AG04450 (cell line): ENCODE measurements at regions of chr1 and their contacts with region 1.

Region 1: GRCh38 chr1:117512743-117513321 is 93.0 kb upstream of the TENT5C start:
- DNase-seq: no peak
- H3K4me3 ChIP-seq: no peak overlapping the region
- H3K27ac ChIP-seq: no peak overlapping the region
- H3K27me3 ChIP-seq: no peaks in the 10 kb centered on the region
- CTCF ChIP-seq: peak; percentile 64

Region 2: DNA sequence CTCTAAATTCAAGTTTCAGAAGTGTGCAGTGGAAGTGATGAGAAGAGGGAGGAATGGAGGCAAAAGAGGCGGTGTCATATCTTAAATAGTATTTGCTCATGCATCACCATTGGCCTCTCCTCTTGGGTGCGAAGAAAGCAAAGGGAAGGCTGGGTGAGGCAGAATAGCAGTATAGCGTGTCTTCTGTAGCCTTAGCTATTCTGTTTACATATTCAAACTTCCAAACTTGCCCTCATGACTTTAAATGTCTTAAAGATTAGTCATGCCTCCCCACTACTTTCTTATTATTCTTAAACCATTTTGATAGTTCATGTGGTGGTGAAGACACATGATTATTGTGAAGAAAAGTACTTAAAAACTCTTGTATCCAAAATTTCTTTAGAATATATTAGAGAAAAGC is 11.6 kb before region 1 on chr1:
- CTCF ChIA-PET with region 1: interaction called, 13 read pairs
- POLR2A ChIA-PET with region 1: no interaction called
- DNase-seq: peak; percentile 43
- H3K4me3 ChIP-seq: no peak overlapping the region
- H3K27ac ChIP-seq: peak overlapping the region; percentile 32
- H3K27me3 ChIP-seq: no peaks in the 10 kb centered on the region
- CTCF ChIP-seq: no peak

Region 3: DNA sequence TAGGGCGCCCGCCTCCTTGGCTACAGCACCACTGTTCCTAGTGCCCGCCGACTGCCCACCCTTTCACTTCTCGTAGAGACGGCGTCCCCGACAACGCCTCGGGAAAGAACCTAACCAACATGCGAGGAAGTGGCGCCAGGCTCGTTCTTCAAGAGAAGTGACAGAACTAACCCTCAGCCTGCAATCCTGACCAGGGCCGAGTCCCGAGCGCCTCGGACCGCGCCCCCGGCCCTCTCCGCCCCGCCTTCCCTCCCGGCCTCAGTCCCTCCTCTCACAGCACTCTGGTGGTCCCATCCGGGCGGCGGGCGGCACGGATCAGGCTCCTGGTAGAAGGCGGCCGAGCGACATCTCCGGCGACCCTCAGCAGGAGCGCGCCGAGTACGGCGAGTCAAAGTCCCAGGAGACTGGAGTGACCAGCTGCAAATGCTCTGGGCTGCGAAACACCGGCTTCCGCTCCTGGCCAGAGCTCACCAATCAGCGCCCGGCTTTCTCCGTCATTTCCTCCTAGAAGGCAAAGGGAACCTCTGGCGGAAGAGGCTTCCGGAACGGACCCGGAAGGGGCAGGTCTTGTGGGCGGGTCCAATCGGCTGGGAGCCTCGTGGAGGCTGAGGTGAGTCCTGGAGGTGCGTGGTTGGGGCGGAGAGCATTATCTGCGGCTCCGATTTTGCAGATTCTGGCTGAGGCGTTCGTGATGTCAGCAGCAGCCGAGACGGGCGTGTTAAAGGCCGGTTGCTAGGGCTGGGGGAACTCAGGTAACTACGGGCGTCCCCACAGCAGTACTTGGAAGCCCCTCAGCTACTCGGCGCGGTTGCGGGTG is 416.5 kb after region 1 on chr1 and contains the starts of genes GDAP2 and WDR3:
- CTCF ChIA-PET with region 1: interaction called, 16 read pairs
- POLR2A ChIA-PET with region 1: interaction called, 4 read pairs
- DNase-seq: peak; percentile 87
- H3K4me3 ChIP-seq: peak within 1 kb of the TSS; percentile 97
- H3K27ac ChIP-seq: peak within 1 kb of the TSS; percentile 73
- H3K27me3 ChIP-seq: no peaks in the 10 kb centered on the region
- CTCF ChIP-seq: no peak
- polyA plus RNA-seq, gene GDAP2: 18.9 and 25.4 TPM in 2 replicates
- polyA plus RNA-seq, gene WDR3: 33.4 and 41.4 TPM in 2 replicates